Activated CD8-positive, alpha-beta memory T cell treated with anti-CD3 and anti-CD28 coated beads, Interleukin-2, amount 10 ng/mL, durations not matched to agents 7 days and 5 days (primary cell): ENCODE measurements at regions of chr21 and their contacts with region 1.

Region 1: DNA sequence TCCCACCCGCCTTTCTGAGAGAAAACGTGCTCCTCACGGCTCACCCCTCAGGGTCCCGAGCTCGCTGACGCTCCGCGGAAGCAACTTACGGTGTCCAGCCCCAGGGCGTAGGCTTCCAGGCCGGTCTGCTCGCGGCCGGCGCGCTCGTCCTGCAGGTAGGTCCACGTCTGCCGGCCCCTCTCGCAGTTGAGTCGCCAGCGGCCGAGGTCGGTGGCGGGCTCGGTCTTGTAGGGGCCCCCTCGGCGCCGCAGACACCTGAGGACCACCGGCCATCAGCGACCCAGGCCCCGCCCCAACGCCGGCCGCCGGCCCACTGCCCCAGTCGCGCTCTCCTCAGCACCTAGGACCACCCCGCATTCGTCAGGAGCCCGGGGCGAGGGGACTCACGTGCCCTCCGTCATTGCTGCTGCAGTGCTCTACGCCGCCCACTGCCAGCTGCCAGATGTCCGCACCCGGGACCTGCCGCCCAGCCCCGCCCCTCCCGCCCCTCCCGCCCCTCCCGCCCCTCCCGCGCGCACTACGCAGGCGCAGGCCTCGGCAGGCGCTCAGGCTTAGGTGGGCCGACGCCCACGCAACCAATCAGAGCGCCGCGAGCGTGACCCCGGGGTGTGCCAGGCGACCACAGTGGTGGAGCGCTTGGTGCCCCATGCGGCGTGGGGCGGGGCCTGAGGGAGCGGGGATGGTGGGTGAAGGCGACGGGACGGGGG is at the start of gene LSS:
- DNase-seq: peak; percentile 99
- ATAC-seq: peak; percentile 96
- H3K4me3 Mint-ChIP-seq: peak within 1 kb of the TSS; percentile 85
- H3K27ac Mint-ChIP-seq: peak within 1 kb of the TSS; percentile 93
- H3K4me1 Mint-ChIP-seq: peaks cover 47% of the 10 kb centered on the region
- H3K27me3 Mint-ChIP-seq: no peaks in the 10 kb centered on the region
- total RNA-seq, gene LSS: 44.9 to 49.5 TPM

Region 2: DNA sequence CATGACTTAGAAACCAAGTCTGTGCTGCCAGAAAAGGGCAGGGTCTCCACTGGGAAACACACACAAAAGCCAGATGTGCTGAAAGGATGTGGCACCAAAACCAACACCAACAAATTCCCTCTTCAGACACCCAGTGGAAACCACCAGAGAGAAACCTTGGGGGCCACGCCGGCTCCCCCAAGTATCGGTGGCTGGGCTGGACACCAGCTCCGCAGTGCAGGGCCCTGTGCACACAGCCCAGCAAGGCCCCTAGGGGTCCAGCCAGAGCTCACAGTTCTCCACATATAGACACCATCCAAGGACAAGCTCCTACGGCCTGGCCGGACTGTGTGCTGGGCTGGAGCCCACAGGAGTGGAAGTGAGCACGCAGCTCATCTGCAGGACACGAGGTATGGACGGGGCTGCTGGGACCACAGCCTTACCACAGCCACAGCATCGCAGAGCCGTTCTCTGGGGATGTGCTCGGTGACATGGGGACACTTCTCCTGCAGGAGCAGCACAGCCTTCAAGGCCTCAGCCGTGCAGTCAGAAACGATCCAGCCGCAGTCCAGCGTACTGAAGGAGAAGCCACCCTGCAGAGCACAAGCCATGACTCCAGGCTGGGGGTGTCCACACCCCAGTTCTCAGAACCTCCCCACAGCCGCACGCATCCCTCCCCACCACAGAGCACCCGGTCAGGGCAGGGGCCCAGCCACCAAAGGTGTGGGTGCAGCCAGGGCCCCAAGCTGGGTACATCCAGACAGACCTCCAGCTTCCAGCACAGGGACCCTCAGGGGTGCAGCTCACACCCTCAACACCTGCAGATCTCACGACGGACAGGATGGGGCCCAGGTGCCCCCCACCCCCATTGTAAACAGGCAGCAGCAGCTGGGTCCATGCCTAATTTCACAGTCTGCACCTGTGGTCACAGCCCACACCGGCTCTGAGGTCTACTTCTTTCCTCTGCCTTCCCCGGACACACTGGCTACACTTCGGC is 21.2 kb before region 1 on chr21:
- CTCF ChIA-PET with region 1: no interaction called
- DNase-seq: no peak
- ATAC-seq: no peak
- H3K4me3 Mint-ChIP-seq: no peak overlapping the region
- H3K27ac Mint-ChIP-seq: no peak overlapping the region
- H3K4me1 Mint-ChIP-seq: peaks cover 1% of the 10 kb centered on the region
- H3K27me3 Mint-ChIP-seq: no peaks in the 10 kb centered on the region

Region 3: GRCh38 chr21:46285761-46286496 is 57.4 kb after region 1 on chr21 and contains the start of gene YBEY:
- CTCF ChIA-PET with region 1: interaction called, 11 read pairs
- DNase-seq: peak; percentile 93
- ATAC-seq: peak; percentile 91
- H3K4me3 Mint-ChIP-seq: peak within 1 kb of the TSS; percentile 83
- H3K27ac Mint-ChIP-seq: peak within 1 kb of the TSS; percentile 93
- H3K4me1 Mint-ChIP-seq: peaks cover 49% of the 10 kb centered on the region
- H3K27me3 Mint-ChIP-seq: no peaks in the 10 kb centered on the region
- total RNA-seq, gene YBEY: 6.9 to 9.1 TPM